CD8-positive, alpha-beta T cell (primary cell): ENCODE measurements at regions of chr2 and their contacts with region 1.

Region 1: GRCh38 chr2:191189112-191189635 is 38.4 kb upstream of the STAT4 start:
- DNase-seq: peak in 2 of 9 experiments; percentile 12 to 45
- ATAC-seq: no peak
- H3K4me3 ChIP-seq: peak overlapping the region; percentile 19 to 39
- H3K4me3 Mint-ChIP-seq: peak overlapping the region; percentile 79
- H3K27ac ChIP-seq: peak overlapping the region in 1 of 2 experiments; percentile 5
- H3K27ac Mint-ChIP-seq: peak overlapping the region; percentile 90
- H3K4me1 ChIP-seq: peaks cover 47% of the 10 kb centered on the region
- H3K4me1 Mint-ChIP-seq: peaks cover 55% of the 10 kb centered on the region
- H3K27me3 ChIP-seq: no peaks in the 10 kb centered on the region
- H3K27me3 Mint-ChIP-seq: no peaks in the 10 kb centered on the region
- CTCF ChIP-seq: no peak

Region 2: GRCh38 chr2:190853531-190854383 is 335.4 kb before region 1 on chr2:
- CTCF ChIA-PET with region 1: no interaction called
- POLR2A ChIA-PET with region 1: no interaction called
- intact Hi-C with region 1: no loop called
- DNase-seq: no peak
- ATAC-seq: no peak
- H3K4me3 ChIP-seq: no peak overlapping the region
- H3K4me3 Mint-ChIP-seq: no peak overlapping the region
- H3K27ac ChIP-seq: no peak overlapping the region
- H3K27ac Mint-ChIP-seq: no peak overlapping the region
- H3K4me1 ChIP-seq: no peaks in the 10 kb centered on the region
- H3K4me1 Mint-ChIP-seq: peaks cover 2% of the 10 kb centered on the region
- H3K27me3 ChIP-seq: no peaks in the 10 kb centered on the region
- H3K27me3 Mint-ChIP-seq: no peaks in the 10 kb centered on the region
- CTCF ChIP-seq: no peak

Region 3: DNA sequence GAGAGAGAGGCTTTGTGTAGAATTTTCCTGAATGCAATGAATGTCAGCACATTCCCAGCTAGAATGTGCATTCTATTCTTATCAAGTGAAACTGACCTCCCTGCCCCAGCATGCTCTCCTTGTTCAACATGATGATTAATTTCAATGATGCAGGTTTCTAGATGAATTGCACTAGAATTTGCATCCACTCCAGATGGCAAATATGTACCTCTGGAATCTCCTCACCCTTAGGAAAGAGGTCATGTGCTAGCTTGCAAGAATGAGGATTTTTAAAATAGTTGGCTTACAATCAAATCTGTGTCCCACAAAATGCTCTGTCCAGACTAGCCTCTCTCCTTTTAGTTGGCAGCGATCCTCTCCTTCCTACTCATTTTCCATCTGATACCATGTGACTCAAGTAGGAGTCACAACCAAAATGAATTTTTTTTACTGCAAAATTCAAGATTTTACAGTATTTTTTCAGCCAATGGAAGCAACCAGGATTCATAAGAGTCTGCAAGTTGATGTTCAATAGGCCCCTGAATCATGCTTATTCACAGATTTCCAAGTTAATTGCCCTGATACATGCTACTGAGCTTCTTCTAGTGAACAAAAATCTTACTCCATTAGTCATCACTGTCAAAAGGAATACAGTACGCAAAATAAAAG is 17.3 kb before region 1 on chr2:
- CTCF ChIA-PET with region 1: interaction called, 4 read pairs
- POLR2A ChIA-PET with region 1: interaction called, 3 read pairs
- intact Hi-C with region 1: loop called in 1 of 2 experiments (anchors 2 kb)
- DNase-seq: no peak
- ATAC-seq: no peak
- H3K4me3 ChIP-seq: no peak overlapping the region
- H3K4me3 Mint-ChIP-seq: no peak overlapping the region
- H3K27ac ChIP-seq: no peak overlapping the region
- H3K27ac Mint-ChIP-seq: no peak overlapping the region
- H3K4me1 ChIP-seq: peaks cover 8% of the 10 kb centered on the region
- H3K4me1 Mint-ChIP-seq: peaks cover 26% of the 10 kb centered on the region
- H3K27me3 ChIP-seq: no peaks in the 10 kb centered on the region
- H3K27me3 Mint-ChIP-seq: no peaks in the 10 kb centered on the region
- CTCF ChIP-seq: no peak

Region 4: DNA sequence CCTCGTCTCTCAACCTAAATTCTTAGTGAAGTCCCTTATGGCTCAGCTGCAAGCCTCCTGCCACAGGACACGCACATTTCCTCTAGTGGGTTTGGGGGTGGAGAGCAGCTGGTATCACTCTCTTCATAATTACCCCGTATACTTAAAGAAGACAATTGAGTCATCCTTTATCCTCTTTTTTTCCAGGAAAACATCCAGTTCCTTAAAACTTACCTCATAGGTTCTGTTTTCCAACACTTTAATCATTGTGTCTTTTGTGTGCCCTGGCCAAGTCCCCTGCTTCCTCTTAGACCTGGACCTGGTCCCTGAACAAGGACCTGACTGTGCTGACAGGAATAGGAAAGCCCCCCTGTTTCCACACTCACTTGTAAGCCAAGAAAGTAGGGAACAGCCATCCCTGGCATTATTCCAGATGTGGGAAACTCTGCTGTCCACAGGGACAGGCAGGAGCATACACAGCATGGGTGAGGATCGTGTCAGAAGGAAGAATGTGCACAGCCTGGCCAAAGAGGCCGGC is 13.8 kb after region 1 on chr2:
- CTCF ChIA-PET with region 1: interaction called, 3 read pairs
- POLR2A ChIA-PET with region 1: interaction called, 10 read pairs
- intact Hi-C with region 1: loop called in 1 of 2 experiments (anchors 2 kb)
- DNase-seq: peak in 3 of 9 experiments; percentile 16 to 61 (median 56)
- ATAC-seq: no peak
- H3K4me3 ChIP-seq: no peak overlapping the region
- H3K4me3 Mint-ChIP-seq: peak overlapping the region; percentile 8
- H3K27ac ChIP-seq: peak overlapping the region in 1 of 2 experiments; percentile 65
- H3K27ac Mint-ChIP-seq: peak overlapping the region; percentile 71
- H3K4me1 ChIP-seq: peaks cover 42% of the 10 kb centered on the region
- H3K4me1 Mint-ChIP-seq: peaks cover 51% of the 10 kb centered on the region
- H3K27me3 ChIP-seq: no peaks in the 10 kb centered on the region
- H3K27me3 Mint-ChIP-seq: no peaks in the 10 kb centered on the region
- CTCF ChIP-seq: no peak

Region 5: DNA sequence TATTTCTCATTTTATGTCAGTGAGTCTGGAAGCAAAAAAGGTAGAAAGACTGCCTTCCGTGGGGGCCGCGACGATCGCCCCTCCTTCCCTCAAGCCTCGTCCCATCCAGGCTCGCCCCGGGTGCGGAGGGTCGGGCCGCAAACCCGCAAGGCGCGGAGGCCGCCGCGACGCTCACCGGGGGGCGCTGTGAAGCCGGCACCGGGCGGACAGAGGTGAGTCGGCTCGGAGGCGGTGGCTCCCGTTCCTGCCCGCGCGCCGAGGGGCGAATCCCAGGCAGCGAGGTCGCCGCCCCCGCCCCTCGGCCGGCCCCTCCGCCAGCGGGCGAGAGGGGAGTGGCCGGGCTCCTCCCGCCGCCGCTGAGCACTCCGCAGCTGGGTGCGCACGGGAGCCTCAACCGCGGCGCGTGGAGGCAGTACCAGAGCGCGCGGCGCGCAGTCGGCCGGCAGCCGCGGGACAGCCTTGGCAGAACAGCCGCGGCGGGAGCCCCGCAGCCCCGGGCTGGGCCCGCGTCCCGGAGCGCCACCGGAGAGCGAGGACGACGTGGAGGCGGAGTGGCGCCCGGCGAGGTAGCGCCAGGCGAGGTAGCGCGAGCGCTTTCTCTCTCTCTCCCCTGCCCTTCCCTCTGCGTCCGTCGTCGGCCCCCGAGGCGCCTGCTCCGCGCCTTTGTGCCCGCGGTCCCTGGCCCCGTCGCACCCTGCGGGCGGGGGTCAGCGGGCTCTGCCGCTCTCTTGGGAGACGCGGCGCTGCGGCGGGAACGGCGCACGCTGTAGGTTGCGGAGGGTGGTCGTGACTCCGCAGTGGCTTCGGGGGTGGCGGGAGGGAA is 56.1 kb after region 1 on chr2 and contains the start of gene MYO1B:
- CTCF ChIA-PET with region 1: no interaction called
- POLR2A ChIA-PET with region 1: no interaction called
- intact Hi-C with region 1: loop called in 1 of 2 experiments (anchors 5 kb)
- DNase-seq: peak in 7 of 9 experiments; percentile 10 to 74 (median 51)
- ATAC-seq: peak; percentile 72
- H3K4me3 ChIP-seq: peak within 1 kb of the TSS; percentile 39 to 64
- H3K4me3 Mint-ChIP-seq: peak within 1 kb of the TSS; percentile 85
- H3K27ac ChIP-seq: no peak within 1 kb of the TSS
- H3K27ac Mint-ChIP-seq: no peak within 1 kb of the TSS
- H3K4me1 ChIP-seq: peaks cover 8% of the 10 kb centered on the region
- H3K4me1 Mint-ChIP-seq: peaks cover 6% of the 10 kb centered on the region
- H3K27me3 ChIP-seq: peaks cover 0 to 6% of the 10 kb centered on the region in 2 experiments
- H3K27me3 Mint-ChIP-seq: peaks cover 10% of the 10 kb centered on the region
- CTCF ChIP-seq: no peak
- total RNA-seq, gene MYO1B: 0.38 to 1.00 TPM

Region 6: GRCh38 chr2:191299010-191299409 is 109.8 kb after region 1 on chr2:
- CTCF ChIA-PET with region 1: no interaction called
- POLR2A ChIA-PET with region 1: no interaction called
- intact Hi-C with region 1: no loop called
- DNase-seq: no peak
- ATAC-seq: no peak
- H3K4me3 ChIP-seq: no peak overlapping the region
- H3K4me3 Mint-ChIP-seq: no peak overlapping the region
- H3K27ac ChIP-seq: no peak overlapping the region
- H3K27ac Mint-ChIP-seq: no peak overlapping the region
- H3K4me1 ChIP-seq: no peaks in the 10 kb centered on the region
- H3K4me1 Mint-ChIP-seq: no peaks in the 10 kb centered on the region
- H3K27me3 ChIP-seq: no peaks in the 10 kb centered on the region
- H3K27me3 Mint-ChIP-seq: peaks cover 6% of the 10 kb centered on the region
- CTCF ChIP-seq: no peak

Region 7: DNA sequence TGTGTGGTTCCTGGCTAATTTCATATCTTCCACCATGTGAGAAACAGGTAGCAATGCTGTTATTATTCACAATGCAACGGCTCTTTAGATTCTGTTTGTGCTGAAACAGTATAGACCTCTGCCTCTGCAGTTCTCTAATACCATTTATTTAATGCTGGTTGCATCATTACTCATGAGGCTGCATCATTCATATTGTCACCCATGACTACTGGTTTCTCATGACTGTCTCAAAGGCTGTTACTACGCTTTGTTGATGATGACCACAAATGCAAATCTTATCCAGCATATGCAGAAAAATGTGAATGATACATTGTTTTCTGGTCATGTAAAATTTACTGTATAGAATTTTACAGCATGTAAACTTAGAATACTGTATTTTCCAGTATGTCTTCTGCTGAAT is 635.2 kb after region 1 on chr2:
- CTCF ChIA-PET with region 1: no interaction called
- POLR2A ChIA-PET with region 1: no interaction called
- intact Hi-C with region 1: no loop called
- DNase-seq: no peak
- ATAC-seq: no peak
- H3K4me3 ChIP-seq: no peak overlapping the region
- H3K4me3 Mint-ChIP-seq: no peak overlapping the region
- H3K27ac ChIP-seq: no peak overlapping the region
- H3K27ac Mint-ChIP-seq: no peak overlapping the region
- H3K4me1 ChIP-seq: no peaks in the 10 kb centered on the region
- H3K4me1 Mint-ChIP-seq: no peaks in the 10 kb centered on the region
- H3K27me3 ChIP-seq: no peaks in the 10 kb centered on the region
- H3K27me3 Mint-ChIP-seq: peaks cover 14% of the 10 kb centered on the region
- CTCF ChIP-seq: no peak